ENCODE measurements at regions of chr14 and their contacts with region 1.

Region 1: GRCh38 chr14:22163051-22163450 is 426.0 kb downstream of the DAD1 start:
- DNase-seq: peak; percentile 43
- ATAC-seq: peak; percentile 72
- H3K4me3 ChIP-seq: no peak overlapping the region
- H3K27ac ChIP-seq: no peak overlapping the region
- H3K4me1 ChIP-seq: no peaks in the 10 kb centered on the region
- H3K27me3 ChIP-seq: no peaks in the 10 kb centered on the region
- CTCF ChIP-seq: peak; percentile 57
- EP300 ChIP-seq: no peak
- POLR2A ChIP-seq: no peak
- RAD21 ChIP-seq: no peak

Region 2: DNA sequence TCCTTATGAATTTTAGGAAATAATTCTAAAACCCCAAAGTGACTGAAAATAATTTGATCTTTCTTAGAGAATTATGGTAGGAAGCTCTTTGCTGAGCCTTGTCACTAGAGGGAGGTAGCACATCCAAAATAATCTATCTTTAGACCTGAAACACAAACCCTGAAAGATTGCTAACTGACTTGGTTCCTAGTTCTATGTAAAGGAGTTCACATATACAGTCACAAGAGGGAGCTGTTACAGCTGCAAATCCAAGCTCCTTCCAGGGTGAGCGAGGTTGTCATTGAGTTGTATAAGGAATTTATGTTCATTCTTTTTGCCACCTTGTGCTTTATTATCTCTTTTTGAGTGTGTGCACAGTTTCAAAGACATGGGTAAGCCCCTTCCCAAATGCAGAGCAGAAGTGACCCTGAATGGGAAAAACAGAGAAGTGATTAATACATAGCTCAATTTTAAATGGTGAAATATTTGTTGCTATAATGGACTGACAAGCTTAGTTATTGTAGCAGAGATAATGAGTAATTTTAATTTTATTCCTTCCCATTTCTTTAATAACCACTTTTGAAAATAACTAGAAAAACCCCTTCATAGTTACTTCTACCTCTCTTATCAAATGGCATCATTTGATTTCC is 38.0 kb after region 1 on chr14:
- CTCF ChIA-PET with region 1: no interaction called
- POLR2A ChIA-PET with region 1: no interaction called
- in situ Hi-C with region 1: no loop called
- intact Hi-C with region 1: loop called (anchors 2 kb)
- DNase-seq: peak; percentile 71
- ATAC-seq: peak; percentile 99
- H3K4me3 ChIP-seq: no peak overlapping the region
- H3K27ac ChIP-seq: no peak overlapping the region
- H3K4me1 ChIP-seq: no peaks in the 10 kb centered on the region
- H3K27me3 ChIP-seq: no peaks in the 10 kb centered on the region
- CTCF ChIP-seq: peak; percentile 68
- EP300 ChIP-seq: no peak
- POLR2A ChIP-seq: no peak
- RAD21 ChIP-seq: no peak

Measured in HepG2 (cell line).